Posterior vena cava (tissue), 2 donors: ENCODE measurements at regions of chr2 and their contacts with region 1.

Region 1: DNA sequence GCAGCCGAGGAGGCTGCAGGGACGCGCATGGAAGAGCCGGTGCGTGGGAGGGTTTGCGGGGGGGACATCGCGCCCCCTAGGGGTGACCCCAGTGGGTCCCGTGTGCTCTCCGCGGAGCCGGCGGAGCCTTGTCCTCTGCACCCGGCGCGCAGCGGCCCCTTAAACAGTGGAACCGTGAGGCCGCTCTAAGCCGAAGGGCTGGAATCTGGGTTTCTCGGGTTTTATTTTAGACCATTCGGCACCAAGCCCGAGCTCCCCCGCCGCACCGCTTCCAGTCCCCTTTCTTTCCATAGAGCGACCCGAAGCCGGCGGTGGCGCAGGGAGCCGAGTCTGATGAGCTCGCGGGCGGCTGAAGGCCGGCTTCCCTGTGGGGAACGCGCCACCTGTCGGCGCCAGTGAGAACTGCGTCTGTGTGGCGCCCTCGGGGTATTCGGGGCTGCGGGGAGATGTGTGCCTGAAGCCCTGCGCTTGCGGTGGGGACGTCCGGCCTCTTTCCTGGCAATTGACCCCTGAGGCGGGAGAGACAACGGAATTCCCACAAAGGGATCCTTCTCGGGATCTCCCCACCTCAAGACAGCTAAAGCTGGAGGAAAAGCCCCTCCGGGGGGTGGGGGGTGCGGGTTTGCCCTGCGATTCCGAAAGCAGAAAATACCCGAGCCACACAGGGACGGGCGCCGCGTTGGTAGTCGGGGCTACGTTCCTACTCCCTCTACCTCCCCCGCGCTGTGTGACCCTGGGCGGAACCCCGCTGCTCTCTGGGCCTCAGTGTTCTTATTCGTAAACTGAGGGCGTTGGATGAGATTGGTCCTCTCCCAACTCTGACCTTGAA is 8.2 kb upstream of the EN1 start:
- DNase-seq: peak; percentile 94

Region 2: GRCh38 chr2:118046634-118047210 is 808.9 kb before region 1 on chr2:
- intact Hi-C with region 1: loop called (anchors 5 to 10 kb)
- DNase-seq: no peak

Region 3: DNA sequence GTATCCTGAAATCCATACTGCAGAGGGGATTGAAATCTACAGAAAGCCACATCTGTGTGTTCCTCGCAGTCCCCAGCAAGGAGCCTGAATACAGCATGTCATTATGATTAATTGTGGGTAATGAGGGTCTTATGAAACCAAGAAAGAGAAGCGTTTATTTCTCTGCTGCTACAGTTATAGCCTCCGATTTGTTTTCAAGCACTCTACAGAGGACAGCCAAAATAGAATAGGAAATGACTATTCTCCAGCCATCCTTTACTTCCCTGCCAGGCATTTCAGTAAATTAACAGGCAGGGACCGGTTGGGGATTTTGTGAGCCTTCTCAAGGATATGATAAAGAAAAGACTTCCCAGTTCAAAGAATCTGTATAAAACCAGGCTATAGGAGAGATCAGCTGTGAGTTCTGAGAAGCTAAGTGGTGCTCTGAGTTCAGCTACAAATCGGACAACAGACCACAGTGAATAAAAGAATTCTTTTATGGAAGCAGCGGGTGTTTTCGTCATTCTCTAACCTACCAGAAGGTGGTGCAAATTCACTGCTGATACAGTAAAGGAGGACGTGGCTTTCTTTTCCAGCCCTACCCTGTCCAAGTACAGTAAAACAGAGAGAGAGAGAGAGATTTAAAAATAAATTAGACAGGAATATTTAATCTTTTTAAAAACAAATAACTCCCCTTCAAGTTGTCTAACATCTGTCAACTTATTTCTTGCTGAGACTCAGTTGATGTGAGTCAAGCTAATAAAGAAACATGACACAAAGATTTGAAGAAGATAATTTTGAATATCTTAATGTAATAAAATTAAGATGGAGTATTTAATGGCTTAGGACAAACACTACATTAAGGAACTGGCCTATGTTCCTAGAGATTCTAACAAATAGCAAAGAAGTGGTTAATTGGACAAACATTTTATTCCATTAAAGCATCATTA is 633.7 kb before region 1 on chr2:
- intact Hi-C with region 1: loop called (anchors 5 kb)
- DNase-seq: no peak

Region 4: GRCh38 chr2:118371515-118371914 is 484.1 kb before region 1 on chr2:
- intact Hi-C with region 1: loop called in 1 of 2 experiments (anchors 5 kb)
- DNase-seq: no peak

Region 5: GRCh38 chr2:118539290-118539689 is 316.4 kb before region 1 on chr2:
- intact Hi-C with region 1: loop called in 1 of 2 experiments (anchors 10 kb)
- DNase-seq: no peak

Region 6: DNA sequence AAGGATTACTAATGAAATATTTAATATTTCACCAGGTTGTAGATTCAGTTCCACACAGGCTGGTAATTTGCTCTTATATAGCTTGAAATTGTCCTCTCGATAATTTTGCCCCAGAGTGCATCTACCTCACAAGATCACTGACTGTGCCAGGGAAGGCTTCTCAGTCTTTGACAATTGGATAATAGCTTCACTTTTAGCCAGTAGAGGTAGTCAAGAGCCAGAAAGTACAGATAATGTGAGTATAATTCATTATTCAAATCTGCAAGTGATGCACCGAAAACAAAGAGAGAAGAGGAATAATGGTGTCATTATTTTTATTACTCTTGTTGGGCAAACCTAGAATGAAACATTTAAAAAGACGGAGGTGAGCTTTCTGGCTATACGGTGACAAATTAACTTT is 301.0 kb before region 1 on chr2:
- intact Hi-C with region 1: loop called in 1 of 2 experiments (anchors 10 kb)
- DNase-seq: no peak